Panc1 (cell line): ENCODE measurements at regions of chr12 and their contacts with region 1.

Region 1: DNA sequence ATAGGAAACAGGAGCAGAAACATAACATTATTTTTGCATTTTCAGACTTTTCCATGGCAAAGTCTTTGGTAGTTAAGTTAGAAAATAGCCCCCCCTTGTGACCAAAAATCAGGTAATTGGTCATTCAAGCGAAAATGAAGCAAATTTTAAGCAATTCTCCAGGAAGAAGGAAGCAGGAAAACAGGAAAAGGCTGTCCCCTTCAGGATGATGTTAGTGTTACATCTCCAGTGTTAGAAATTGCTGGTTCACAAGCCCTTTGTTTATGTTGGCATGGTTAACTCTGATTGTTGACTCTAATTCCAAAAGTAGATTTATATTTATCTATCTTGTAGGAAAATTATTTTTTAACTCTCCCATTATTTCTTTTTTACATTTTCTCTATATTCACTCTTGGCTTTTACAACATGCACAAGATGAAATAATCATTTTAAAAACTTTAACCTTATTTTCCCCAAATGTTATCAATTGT is 18.8 kb upstream of the GAS2L3 start:
- DNase-seq: peak; percentile 58
- ATAC-seq: peak; percentile 80
- H3K4me3 ChIP-seq: no peak overlapping the region
- H3K27ac ChIP-seq: no peak overlapping the region
- H3K4me1 ChIP-seq: no peaks in the 10 kb centered on the region
- H3K27me3 ChIP-seq: no peaks in the 10 kb centered on the region
- CTCF ChIP-seq: peak; percentile 85; the same call in 1 of the 2 replicates

Region 2: DNA sequence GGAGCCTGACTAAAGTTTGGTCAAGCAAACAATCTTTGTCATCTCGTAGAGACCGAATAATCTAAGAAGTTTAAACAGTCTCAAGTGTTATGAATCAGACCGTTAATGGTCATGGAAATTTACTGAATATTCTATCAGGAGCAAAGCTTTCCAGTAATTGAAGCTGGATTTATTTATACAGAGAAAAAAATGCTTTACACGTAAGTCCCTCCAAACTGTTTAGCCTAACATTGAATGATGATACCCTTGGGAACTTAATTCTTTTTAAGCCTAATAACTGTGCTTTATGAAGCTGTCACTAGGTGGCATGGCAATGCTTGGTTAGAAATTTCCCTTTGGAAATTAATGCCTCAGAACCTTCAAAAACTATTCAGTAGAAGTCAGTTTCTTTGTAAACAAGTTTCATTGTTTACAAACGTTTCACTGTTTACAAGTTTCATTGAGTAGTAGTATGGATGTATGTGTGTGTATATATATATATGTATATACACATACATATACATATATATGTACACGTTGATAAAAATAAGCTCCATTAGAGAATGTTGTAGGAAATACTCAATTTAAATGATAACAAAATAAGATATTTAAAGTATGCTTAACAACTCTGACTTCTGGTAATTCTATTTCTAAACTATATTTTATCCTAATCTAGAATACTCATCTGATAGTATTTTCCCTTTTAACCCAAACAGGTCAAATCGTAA is 319.9 kb before region 1 on chr12:
- CTCF ChIA-PET with region 1: no interaction called
- POLR2A ChIA-PET with region 1: no interaction called
- in situ Hi-C with region 1: no loop called
- intact Hi-C with region 1: loop called (anchors 5 kb)
- DNase-seq: peak; percentile 17
- ATAC-seq: peak; percentile 83
- H3K4me3 ChIP-seq: no peak overlapping the region
- H3K27ac ChIP-seq: no peak overlapping the region
- H3K4me1 ChIP-seq: peaks cover 9% of the 10 kb centered on the region
- H3K27me3 ChIP-seq: no peaks in the 10 kb centered on the region
- CTCF ChIP-seq: peak; percentile 78; the same call in 1 of the 2 replicates

Region 3: DNA sequence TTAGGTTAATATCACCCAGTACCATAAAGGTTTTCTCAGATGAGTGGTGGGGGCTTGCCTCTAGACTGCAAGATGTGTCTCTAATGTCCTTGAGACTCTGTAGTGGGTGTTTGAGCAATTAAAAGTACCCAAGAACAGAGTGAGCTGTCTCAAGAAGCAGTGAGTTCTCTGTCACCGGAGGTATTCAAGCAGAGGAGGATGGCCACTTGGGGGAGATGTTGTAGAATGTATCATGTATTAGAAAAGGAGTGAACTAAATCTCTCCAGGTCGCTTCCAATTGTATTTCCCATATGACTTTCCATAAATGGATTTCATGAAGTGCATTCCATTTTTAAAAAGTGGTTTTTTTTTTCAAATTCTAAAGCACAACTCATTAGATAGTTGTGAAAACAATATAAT is 162.8 kb before region 1 on chr12:
- CTCF ChIA-PET with region 1: no interaction called
- POLR2A ChIA-PET with region 1: no interaction called
- in situ Hi-C with region 1: no loop called
- intact Hi-C with region 1: loop called (anchors 10 kb)
- DNase-seq: no peak
- ATAC-seq: 0 out of 2 replicates have a peak, but pooled peaks have one; percentile 71
- H3K4me3 ChIP-seq: no peak overlapping the region
- H3K27ac ChIP-seq: no peak overlapping the region
- H3K4me1 ChIP-seq: no peaks in the 10 kb centered on the region
- H3K27me3 ChIP-seq: no peaks in the 10 kb centered on the region
- CTCF ChIP-seq: peak; percentile 40

Region 4: DNA sequence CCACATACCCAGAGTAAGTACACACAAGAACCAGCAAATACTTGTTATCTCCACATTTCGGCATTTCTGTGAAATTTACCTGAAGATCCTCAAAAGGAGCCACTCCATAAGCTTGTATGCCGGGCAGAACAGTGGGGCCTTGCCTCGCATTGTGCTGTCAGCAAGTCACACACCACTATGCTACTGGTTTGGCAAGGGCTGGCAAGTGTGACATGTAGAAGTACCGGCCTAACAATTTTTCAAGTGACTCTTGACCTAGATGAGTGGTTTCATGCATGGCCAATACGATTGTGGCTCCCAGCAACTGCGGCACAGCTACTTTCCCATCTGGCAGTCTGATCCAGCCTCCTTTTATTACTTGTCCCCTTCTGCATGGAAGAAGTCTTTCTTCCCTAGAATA is 88.6 kb after region 1 on chr12:
- CTCF ChIA-PET with region 1: no interaction called
- POLR2A ChIA-PET with region 1: no interaction called
- in situ Hi-C with region 1: no loop called
- intact Hi-C with region 1: no loop called
- DNase-seq: no peak
- ATAC-seq: no peak
- H3K4me3 ChIP-seq: no peak overlapping the region
- H3K27ac ChIP-seq: no peak overlapping the region
- H3K4me1 ChIP-seq: no peaks in the 10 kb centered on the region
- H3K27me3 ChIP-seq: no peaks in the 10 kb centered on the region
- CTCF ChIP-seq: no peak

Region 5: GRCh38 chr12:100753837-100754236 is 199.2 kb after region 1 on chr12:
- CTCF ChIA-PET with region 1: no interaction called
- POLR2A ChIA-PET with region 1: no interaction called
- in situ Hi-C with region 1: no loop called
- intact Hi-C with region 1: no loop called
- DNase-seq: no peak
- ATAC-seq: no peak
- H3K4me3 ChIP-seq: no peak overlapping the region
- H3K27ac ChIP-seq: no peak overlapping the region
- H3K4me1 ChIP-seq: no peaks in the 10 kb centered on the region
- H3K27me3 ChIP-seq: no peaks in the 10 kb centered on the region
- CTCF ChIP-seq: no peak